ENCODE measurements at regions of chr16 and their contacts with region 1.

Region 1: DNA sequence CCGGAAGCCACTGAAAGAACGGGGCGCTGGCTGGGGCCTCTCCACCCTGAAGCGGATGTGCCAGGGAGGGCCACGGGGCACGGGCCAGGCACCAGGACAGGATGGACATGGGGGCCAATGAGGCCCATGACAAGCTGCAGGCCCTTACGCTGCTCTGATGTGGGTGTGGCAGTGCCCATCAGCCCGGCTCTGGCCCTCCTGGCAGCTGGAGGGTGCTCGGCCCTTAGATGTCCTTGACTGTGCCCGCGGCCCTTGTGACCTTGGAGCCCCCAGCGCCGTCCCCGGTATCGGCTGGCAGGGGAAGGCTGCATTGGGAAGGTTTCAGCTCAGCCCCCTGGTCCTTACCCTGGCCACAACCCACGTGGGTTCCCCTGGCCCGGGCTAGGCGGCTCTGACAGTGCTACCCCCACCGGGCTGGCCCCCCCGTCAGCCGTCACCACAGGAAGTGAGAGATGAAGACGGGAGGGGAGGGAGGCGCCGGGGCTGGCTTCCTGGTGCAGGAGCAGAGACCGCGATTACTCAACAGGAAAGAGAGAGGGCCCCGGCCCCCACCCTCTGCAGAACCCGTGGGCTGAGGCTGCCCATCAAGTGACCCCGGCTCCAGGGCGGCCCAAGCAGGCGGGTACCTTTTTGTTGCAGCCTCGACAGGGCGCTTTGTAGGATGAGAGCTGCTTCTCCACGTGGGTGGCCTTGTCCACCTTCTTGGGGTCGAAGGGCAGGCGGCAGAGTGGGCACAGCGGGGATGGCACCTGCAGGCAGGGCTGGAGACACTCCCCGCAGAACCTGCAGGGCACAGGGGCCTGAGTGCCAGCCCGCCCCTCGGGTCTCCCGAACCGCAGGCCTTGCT is 5.3 kb downstream of the RNF166 start:
- DNase-seq: peak; percentile 95 to 96
- ATAC-seq: peak; percentile 76 to 92 (median 82)
- H3K4me3 ChIP-seq: peak overlapping the region; percentile 67
- H3K4me3 Mint-ChIP-seq: peak overlapping the region; percentile 94
- H3K27ac ChIP-seq: peak overlapping the region; percentile 83
- H3K27ac Mint-ChIP-seq: peak overlapping the region; percentile 89 to 96
- H3K4me1 ChIP-seq: peaks cover 84% of the 10 kb centered on the region
- H3K4me1 Mint-ChIP-seq: peaks cover 53 to 70% of the 10 kb centered on the region in 2 donors
- H3K27me3 ChIP-seq: no peaks in the 10 kb centered on the region
- H3K27me3 Mint-ChIP-seq: no peaks in the 10 kb centered on the region
- CTCF ChIP-seq: no peak

Region 2: DNA sequence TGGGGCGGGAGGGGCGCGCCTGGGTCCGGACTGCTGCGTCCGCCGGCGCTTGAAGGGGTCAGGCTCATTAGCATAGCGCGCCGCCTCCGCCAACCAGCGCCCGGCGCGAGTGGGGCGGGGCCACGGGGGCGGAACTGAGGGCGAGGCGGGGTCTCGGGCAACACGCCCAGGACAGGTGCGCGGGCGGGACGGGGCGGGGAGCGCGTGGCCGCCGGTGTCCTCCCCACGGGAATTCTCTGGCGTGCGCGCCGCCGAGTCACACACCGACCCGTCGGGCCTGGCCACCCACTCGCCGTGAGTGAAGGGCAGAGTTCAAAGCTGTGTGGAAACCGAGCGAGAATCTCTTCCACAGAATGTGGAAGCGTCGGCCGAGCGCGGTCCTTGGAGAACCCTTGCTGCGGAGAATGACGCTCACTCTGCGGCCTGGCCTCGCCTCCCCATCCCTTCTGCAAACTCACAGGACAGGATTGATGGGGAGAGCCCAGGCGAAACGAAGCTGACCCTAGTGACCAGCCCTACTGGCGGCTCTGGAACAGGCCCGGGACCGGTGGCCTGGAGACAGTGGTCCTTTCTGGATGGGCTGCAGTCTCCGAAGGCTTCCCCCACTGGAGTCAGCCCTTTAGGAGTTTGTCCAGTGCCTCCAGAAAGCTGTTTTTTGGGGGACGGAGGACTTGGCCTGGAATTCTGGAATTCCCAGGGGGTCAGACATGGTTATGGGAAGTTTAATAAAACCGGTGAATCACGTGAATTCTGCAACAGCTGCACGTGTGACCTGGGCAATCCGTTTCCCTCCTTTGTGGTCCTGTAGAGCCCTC is 14.2 kb before region 1 on chr16 and contains the start of gene SNAI3:
- intact Hi-C with region 1: loop called (anchors 2 kb)
- DNase-seq: peak; percentile 88 to 89
- ATAC-seq: peak; percentile 86 to 94 (median 93)
- H3K4me3 ChIP-seq: peak within 1 kb of the TSS; percentile 92
- H3K4me3 Mint-ChIP-seq: peak within 1 kb of the TSS; percentile 84
- H3K27ac ChIP-seq: peak within 1 kb of the TSS; percentile 63
- H3K27ac Mint-ChIP-seq: peak within 1 kb of the TSS; percentile 36 to 73
- H3K4me1 ChIP-seq: peaks cover 55% of the 10 kb centered on the region
- H3K4me1 Mint-ChIP-seq: peaks cover 15 to 45% of the 10 kb centered on the region in 2 donors
- H3K27me3 ChIP-seq: no peaks in the 10 kb centered on the region
- H3K27me3 Mint-ChIP-seq: no peaks in the 10 kb centered on the region
- CTCF ChIP-seq: no peak
- total RNA-seq, gene SNAI3: 8.2 to 9.2 (median 8.4) TPM

Region 3: DNA sequence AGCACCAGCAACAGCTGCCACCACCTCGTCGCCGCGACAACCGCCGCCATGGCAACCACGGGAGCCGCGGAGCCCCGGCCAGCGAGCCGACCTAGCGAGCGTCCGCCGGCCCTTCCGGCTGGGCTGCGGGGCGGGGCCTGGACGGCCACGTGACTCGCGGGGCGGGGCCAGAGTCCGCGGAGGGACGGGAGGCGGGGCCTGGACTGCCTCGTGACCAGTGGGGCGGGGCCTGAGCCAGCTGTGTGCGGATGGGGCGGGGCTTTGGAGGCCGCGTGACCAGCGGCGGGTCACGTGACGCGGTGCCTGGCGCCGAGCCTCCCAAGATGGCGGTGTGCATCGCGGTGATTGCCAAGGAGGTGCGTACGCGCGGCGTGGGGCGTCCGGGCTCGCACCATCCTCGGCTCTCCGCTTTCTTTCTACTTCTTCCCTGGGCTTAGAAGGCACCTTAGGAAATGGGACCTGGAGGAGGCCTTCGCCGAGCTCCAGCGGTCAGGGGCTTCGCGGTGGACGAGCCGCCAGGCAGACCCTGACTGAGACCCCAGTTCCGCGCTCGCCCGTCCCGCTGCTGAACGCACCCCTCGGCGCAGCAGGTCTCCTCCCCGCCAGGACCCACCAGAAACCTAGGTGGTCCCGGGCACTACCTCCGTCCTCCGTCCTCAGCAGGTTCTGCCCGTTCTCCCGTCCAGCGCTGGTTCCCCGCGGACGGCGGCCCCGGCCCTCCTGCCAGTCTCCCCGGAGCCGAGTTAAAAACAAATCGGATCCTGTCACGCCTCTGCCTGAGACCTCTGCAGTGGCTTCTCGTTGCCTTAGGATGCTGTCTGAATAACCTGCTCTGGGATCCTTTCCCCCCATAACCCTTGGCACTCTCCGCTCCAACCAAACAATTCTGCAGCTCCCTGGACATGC is 156.2 kb after region 1 on chr16 and contains the starts of genes GALNS and TRAPPC2L:
- intact Hi-C with region 1: no loop called
- DNase-seq: peak; percentile 99 to 100
- ATAC-seq: peak; percentile 90 to 98 (median 92)
- H3K4me3 ChIP-seq: peak within 1 kb of the TSS; percentile 97
- H3K4me3 Mint-ChIP-seq: peak within 1 kb of the TSS; percentile 97
- H3K27ac ChIP-seq: peak within 1 kb of the TSS; percentile 68
- H3K27ac Mint-ChIP-seq: peak within 1 kb of the TSS; percentile 91 to 93
- H3K4me1 ChIP-seq: peaks cover 43% of the 10 kb centered on the region
- H3K4me1 Mint-ChIP-seq: peaks cover 23 to 33% of the 10 kb centered on the region in 2 donors
- H3K27me3 ChIP-seq: no peaks in the 10 kb centered on the region
- H3K27me3 Mint-ChIP-seq: no peaks in the 10 kb centered on the region
- CTCF ChIP-seq: no peak
- total RNA-seq, gene GALNS: 58.1 to 75.8 (median 65.7) TPM
- total RNA-seq, gene TRAPPC2L: 31.9 to 39.0 (median 36.2) TPM

Region 4: DNA sequence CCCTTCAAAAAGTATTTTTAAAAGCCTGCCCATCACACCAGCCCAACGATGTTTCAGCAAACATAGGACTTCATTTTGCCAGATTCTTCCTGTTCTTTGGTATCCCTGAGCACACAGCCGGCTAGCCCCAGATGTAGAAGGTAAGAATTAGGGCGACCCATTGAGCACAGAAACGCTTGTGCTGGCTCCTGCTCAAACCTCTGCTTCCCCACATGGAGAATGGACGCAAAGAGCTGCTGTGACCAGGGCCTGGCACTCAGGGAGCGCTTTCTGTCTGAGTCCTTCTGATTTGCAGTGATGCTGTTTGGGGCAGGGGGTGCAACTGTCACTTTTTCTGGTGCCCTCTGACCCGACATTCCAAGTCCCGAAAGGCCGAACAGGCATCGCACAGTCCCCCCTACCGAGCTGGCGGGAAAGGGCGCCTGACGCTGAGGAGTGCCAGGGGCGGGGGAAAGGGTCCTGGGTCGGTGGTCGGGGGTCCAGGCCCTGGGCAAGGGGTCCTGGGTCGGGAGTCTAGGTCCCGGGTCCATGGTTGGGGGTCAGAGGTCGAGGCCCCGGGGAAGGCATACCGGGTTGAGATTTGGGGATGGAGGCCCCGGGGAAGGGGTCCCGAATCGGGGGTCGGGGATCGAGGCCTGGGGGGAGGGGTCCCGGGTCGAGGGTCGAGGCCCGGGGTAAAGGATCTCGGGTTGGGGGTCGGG is 955.7 kb after region 1 on chr16:
- intact Hi-C with region 1: no loop called
- DNase-seq: no peak
- ATAC-seq: no peak
- H3K4me3 ChIP-seq: peak overlapping the region; percentile 78
- H3K4me3 Mint-ChIP-seq: peak overlapping the region; percentile 91
- H3K27ac ChIP-seq: peak overlapping the region; percentile 68
- H3K27ac Mint-ChIP-seq: peak overlapping the region; percentile 76 to 83
- H3K4me1 ChIP-seq: peaks cover 42% of the 10 kb centered on the region
- H3K4me1 Mint-ChIP-seq: peaks cover 27 to 37% of the 10 kb centered on the region in 2 donors
- H3K27me3 ChIP-seq: no peaks in the 10 kb centered on the region
- H3K27me3 Mint-ChIP-seq: no peaks in the 10 kb centered on the region
- CTCF ChIP-seq: no peak

Measured in natural killer cell (primary cell).